Kidney (tissue), 22 donors: ENCODE measurements at regions of chr19 and their contacts with region 1.

Region 1: GRCh38 chr19:2610637-2611482 is 91.6 kb downstream of the GNG7 start:
- DNase-seq: peak; percentile 93 to 96 (median 94)
- H3K4me3 ChIP-seq: peak overlapping the region; percentile 33 to 61 (median 46)
- H3K27ac ChIP-seq: peak overlapping the region; percentile 40 to 76
- H3K4me1 ChIP-seq: peaks cover 0 to 9% (median 0%) of the 10 kb centered on the region in 3 donors
- H3K27me3 ChIP-seq: no peaks in the 10 kb centered on the region
- CTCF ChIP-seq: peak; percentile 94

Region 2: GRCh38 chr19:2474232-2475017 is 136.4 kb before region 1 on chr19:
- intact Hi-C with region 1: loop called (anchors 5 kb)
- DNase-seq: peak; percentile 89 to 96 (median 93)
- H3K4me3 ChIP-seq: peak overlapping the region in 2 of 3 donors; percentile 31 to 60
- H3K27ac ChIP-seq: peak overlapping the region; percentile 93 to 95
- H3K4me1 ChIP-seq: peaks cover 0 to 13% (median 0%) of the 10 kb centered on the region in 3 donors
- H3K27me3 ChIP-seq: no peaks in the 10 kb centered on the region
- CTCF ChIP-seq: peak; percentile 97

Region 3: GRCh38 chr19:2517868-2518625 is 92.8 kb before region 1 on chr19:
- intact Hi-C with region 1: no loop called
- DNase-seq: peak in 2 of 5 donors; percentile 46 to 68
- H3K4me3 ChIP-seq: no peak overlapping the region
- H3K27ac ChIP-seq: no peak overlapping the region
- H3K4me1 ChIP-seq: no peaks in the 10 kb centered on the region
- H3K27me3 ChIP-seq: no peaks in the 10 kb centered on the region
- CTCF ChIP-seq: no peak